ENCODE measurements at regions of chr20 and their contacts with region 1.

Region 1: GRCh38 chr20:41173161-41173721 is 35.9 kb downstream of the PLCG1 start:
- DNase-seq: no peak
- H3K4me3 Mint-ChIP-seq: no peak overlapping the region
- H3K27ac Mint-ChIP-seq: no peak overlapping the region
- H3K4me1 Mint-ChIP-seq: peaks cover 2% of the 10 kb centered on the region
- H3K27me3 Mint-ChIP-seq: no peaks in the 10 kb centered on the region

Region 2: DNA sequence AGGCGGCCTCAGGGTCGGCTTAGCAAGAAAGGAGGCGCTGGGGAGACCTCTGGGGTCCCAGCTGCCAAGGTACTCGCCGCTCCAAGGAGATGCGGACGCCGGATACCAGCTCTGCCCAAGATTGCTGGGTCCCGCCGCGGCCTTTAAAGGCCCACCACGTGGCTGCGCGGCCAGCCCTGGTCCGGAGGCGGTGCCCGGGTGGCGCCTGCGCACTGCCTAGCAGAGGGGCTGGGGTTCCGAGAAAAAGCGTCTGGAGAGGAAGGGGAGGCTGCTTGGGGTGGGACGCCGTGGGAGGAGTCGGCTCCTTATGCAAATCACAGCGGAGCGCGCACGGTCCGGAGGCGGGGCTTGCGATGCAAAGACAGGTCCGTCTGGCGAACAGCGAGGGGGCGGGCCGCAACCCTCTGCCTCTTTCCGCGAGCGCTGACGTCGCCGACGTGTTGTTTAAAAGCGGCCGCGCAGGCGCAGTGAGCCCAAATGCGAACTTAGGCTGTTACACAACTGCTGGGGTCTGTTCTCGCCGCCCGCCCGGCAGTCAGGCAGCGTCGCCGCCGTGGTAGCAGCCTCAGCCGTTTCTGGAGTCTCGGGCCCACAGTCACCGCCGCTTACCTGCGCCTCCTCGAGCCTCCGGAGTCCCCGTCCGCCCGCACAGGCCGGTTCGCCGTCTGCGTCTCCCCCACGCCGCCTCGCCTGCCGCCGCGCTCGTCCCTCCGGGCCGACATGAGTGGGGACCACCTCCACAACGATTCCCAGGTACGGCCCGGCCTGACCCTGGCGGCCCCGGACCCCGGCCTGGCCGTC is 144.7 kb before region 1 on chr20 and contains the start of gene TOP1:
- intact Hi-C with region 1: no loop called
- DNase-seq: peak; percentile 100
- H3K4me3 Mint-ChIP-seq: peak within 1 kb of the TSS; percentile 82
- H3K27ac Mint-ChIP-seq: peak within 1 kb of the TSS; percentile 76
- H3K4me1 Mint-ChIP-seq: peaks cover 41% of the 10 kb centered on the region
- H3K27me3 Mint-ChIP-seq: no peaks in the 10 kb centered on the region
- total RNA-seq, gene TOP1: 116 and 118 TPM in 2 replicates

Region 3: GRCh38 chr20:41339507-41340326 is 166.5 kb after region 1 on chr20:
- intact Hi-C with region 1: loop called (anchors 2 kb)
- DNase-seq: peak; percentile 77
- H3K4me3 Mint-ChIP-seq: peak overlapping the region; percentile 77
- H3K27ac Mint-ChIP-seq: no peak overlapping the region
- H3K4me1 Mint-ChIP-seq: peaks cover 10% of the 10 kb centered on the region
- H3K27me3 Mint-ChIP-seq: peaks cover 8% of the 10 kb centered on the region

Region 4: GRCh38 chr20:41811456-41811855 is 638.2 kb after region 1 on chr20:
- intact Hi-C with region 1: no loop called
- DNase-seq: no peak
- H3K4me3 Mint-ChIP-seq: no peak overlapping the region
- H3K27ac Mint-ChIP-seq: no peak overlapping the region
- H3K4me1 Mint-ChIP-seq: no peaks in the 10 kb centered on the region
- H3K27me3 Mint-ChIP-seq: no peaks in the 10 kb centered on the region

Measured in activated T-helper 2 cell treated with anti-CD3 and anti-CD28 coated beads, Interferon-gamma antibody, Interleukin-2, Interleukin-4, amounts not matched to agents 10 μg/mL and 5 μg/mL and 100 μg/mL, durations not matched to agents 14 hours and 24 hours and 36 hours (primary cell).